ENCODE measurements at regions of chr6 and their contacts with region 1.

Region 1: DNA sequence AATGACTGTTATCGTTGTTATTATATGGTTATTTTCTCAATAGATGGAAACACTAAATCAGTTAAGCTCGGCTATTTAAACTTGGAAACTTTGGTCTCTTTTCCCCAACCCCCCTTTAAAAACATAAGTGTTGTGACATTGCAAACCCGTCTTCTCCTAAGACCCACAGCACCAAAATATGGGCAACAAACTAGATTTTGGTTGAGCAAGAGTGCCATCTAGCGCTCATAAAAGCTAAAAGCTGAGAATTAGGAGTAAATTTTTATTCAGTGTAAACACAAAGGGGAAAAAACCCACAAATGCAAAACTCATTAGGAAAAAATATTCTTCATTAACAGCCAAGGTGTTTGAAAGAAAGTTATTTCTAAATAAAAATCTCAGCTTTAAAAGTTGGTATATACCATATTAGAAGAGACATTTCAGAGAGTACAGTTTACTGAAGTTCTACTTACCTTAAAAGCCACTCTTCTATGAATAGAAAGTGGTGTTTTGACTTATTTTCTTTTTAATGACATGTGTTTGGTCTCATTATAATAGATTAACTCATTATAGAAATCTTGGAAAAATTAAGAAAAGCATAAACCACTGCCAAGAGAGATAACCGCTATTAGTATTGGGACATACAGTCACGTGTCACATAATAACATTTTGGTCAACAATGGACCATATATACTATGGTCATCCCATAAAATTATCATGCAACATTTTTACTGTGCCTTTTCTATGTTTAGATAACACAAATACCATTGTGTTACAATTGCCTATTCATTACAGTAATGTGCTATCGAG is 21.1 kb downstream of the SESN1 start:
- DNase-seq: peak; percentile 33
- H3K4me3 Mint-ChIP-seq: no peak overlapping the region
- H3K27ac Mint-ChIP-seq: no peak overlapping the region
- H3K4me1 Mint-ChIP-seq: peaks cover 21% of the 10 kb centered on the region
- H3K27me3 Mint-ChIP-seq: no peaks in the 10 kb centered on the region

Region 2: DNA sequence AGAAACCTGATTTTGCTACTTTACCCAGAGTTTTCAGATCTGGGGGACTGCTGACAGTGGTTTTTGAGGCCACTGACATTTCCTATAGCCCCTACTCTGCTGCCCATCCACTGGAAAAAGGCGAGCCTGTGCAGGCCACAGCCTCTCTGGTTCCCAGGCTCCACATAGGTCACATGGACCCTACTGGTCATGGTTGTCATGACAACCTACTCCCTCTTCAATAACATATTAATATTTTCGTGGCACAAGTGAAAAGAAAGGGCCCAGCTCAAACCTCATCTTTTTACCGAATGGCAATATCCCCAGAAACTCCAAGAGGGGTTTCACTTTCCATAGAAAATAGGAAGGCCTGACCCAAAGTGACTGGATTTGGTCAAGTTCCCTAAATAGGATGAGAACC is 523.8 kb before region 1 on chr6:
- CTCF ChIA-PET with region 1: interaction called, 125 read pairs
- POLR2A ChIA-PET with region 1: no interaction called
- intact Hi-C with region 1: no loop called
- DNase-seq: no peak
- H3K4me3 Mint-ChIP-seq: no peak overlapping the region
- H3K27ac Mint-ChIP-seq: no peak overlapping the region
- H3K4me1 Mint-ChIP-seq: no peaks in the 10 kb centered on the region
- H3K27me3 Mint-ChIP-seq: no peaks in the 10 kb centered on the region

Region 3: DNA sequence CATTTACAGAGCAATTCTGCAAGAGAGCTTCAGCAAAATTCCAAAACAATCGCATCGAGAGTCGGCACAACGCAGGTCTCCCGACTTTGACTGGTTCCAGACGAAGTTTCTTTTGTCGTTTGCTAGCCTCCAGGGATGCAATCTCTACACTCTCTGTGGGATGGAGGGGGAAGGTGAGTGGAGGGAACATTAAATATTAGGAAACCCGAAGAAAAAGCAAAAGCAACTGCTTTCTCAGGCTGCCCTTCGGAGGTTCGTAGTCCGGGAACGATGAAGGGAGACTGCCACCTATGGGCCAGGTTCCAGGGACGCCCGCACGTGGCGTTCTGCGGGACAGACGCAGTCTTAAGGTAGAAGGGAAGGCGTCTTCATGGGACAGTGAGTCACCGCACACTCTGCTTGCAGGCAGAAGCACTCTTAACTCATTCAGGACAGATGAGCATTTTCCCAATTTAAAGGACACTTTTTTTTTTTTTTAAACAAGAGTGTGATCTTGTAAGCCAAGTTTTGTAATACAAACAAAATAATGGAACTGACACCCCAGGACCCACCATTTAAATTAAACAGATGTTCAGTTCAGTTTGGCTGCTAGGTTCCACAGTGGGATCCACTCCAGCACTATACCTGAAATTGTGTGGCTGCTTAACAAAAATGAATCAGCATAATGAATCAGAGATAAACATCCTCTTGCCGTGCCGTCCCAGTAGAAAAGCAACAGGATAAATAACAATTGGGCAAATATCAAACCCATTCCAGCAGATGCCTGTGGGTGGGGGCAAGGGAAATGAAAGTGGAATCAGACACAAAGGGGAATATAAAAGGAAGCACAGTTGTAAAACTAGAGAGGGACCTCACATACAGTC is 291.1 kb before region 1 on chr6:
- CTCF ChIA-PET with region 1: interaction called, 7 read pairs
- POLR2A ChIA-PET with region 1: no interaction called
- intact Hi-C with region 1: loop called (anchors 2 kb)
- DNase-seq: peak; percentile 91
- H3K4me3 Mint-ChIP-seq: peak overlapping the region; percentile 73
- H3K27ac Mint-ChIP-seq: no peak overlapping the region
- H3K4me1 Mint-ChIP-seq: peaks cover 11% of the 10 kb centered on the region
- H3K27me3 Mint-ChIP-seq: no peaks in the 10 kb centered on the region

Region 4: DNA sequence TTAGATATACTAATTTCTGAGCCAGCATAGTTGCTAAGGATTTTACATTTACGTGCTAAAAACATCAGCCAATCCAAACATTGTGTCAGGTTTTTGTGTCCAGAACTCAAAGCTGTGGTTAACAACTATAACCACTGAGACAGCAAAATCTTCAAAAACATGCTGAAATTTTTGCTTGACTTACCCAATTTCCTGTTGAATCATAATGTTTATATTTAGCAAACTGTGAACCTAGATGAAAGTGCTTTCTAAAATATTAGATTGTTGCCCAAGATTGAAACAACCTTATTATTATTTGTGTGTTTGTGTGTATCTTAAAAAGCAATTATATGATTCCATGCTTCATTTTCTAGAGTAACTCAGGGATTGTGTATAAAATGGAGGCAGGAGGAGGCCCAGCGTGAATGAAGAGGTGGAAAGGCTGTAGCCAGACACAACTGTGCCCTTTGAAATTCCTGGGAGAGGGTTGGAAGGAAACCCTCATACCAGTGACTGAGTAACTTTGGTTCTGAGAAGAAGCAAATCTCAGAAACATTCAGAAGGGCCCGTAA is 177.4 kb before region 1 on chr6:
- CTCF ChIA-PET with region 1: interaction called, 24 read pairs
- POLR2A ChIA-PET with region 1: no interaction called
- intact Hi-C with region 1: loop called (anchors 5 kb)
- DNase-seq: no peak
- H3K4me3 Mint-ChIP-seq: no peak overlapping the region
- H3K27ac Mint-ChIP-seq: peak overlapping the region; percentile 56
- H3K4me1 Mint-ChIP-seq: peaks cover 33% of the 10 kb centered on the region
- H3K27me3 Mint-ChIP-seq: no peaks in the 10 kb centered on the region

Region 5: GRCh38 chr6:108921547-108922361 is 151.8 kb before region 1 on chr6:
- CTCF ChIA-PET with region 1: interaction called, 39 read pairs
- POLR2A ChIA-PET with region 1: no interaction called
- intact Hi-C with region 1: loop called (anchors 2 kb)
- DNase-seq: peak; percentile 68
- H3K4me3 Mint-ChIP-seq: peak overlapping the region; percentile 33
- H3K27ac Mint-ChIP-seq: peak overlapping the region; percentile 81
- H3K4me1 Mint-ChIP-seq: peaks cover 31% of the 10 kb centered on the region
- H3K27me3 Mint-ChIP-seq: peaks cover 4% of the 10 kb centered on the region

Region 6: GRCh38 chr6:109009236-109009961 is 64.1 kb before region 1 on chr6:
- CTCF ChIA-PET with region 1: interaction called, 21 read pairs
- POLR2A ChIA-PET with region 1: interaction called, 4 read pairs
- intact Hi-C with region 1: loop called (anchors 2 kb)
- DNase-seq: peak; percentile 93
- H3K4me3 Mint-ChIP-seq: peak overlapping the region; percentile 94
- H3K27ac Mint-ChIP-seq: peak overlapping the region; percentile 92
- H3K4me1 Mint-ChIP-seq: peaks cover 60% of the 10 kb centered on the region
- H3K27me3 Mint-ChIP-seq: no peaks in the 10 kb centered on the region

Region 7: DNA sequence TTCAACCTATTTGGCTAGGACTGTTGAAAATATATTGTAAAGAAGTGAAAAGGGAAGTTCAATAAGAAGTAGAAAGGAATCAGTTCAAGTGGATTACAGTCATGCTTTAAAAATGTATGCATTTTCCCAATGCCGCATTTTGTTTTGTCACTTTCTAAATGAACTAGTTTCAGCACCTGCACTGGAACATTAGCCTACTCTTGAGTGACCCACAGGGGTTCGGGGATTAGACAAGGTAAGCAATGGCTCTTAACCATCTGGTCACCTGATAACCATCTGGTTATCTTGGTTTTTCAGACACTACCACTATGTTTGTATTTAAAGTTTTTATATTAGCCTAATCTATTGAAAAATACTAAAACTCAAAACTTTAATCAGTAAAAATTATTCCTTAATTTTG is 211.1 kb after region 1 on chr6:
- CTCF ChIA-PET with region 1: no interaction called
- POLR2A ChIA-PET with region 1: no interaction called
- intact Hi-C with region 1: no loop called
- DNase-seq: no peak
- H3K4me3 Mint-ChIP-seq: no peak overlapping the region
- H3K27ac Mint-ChIP-seq: no peak overlapping the region
- H3K4me1 Mint-ChIP-seq: no peaks in the 10 kb centered on the region
- H3K27me3 Mint-ChIP-seq: peaks cover 5% of the 10 kb centered on the region

Region 8: GRCh38 chr6:109322825-109323224 is 249.3 kb after region 1 on chr6:
- CTCF ChIA-PET with region 1: no interaction called
- POLR2A ChIA-PET with region 1: no interaction called
- intact Hi-C with region 1: no loop called
- DNase-seq: no peak
- H3K4me3 Mint-ChIP-seq: no peak overlapping the region
- H3K27ac Mint-ChIP-seq: no peak overlapping the region
- H3K4me1 Mint-ChIP-seq: peaks cover 4% of the 10 kb centered on the region
- H3K27me3 Mint-ChIP-seq: no peaks in the 10 kb centered on the region

Region 9: GRCh38 chr6:109374326-109374859 is 300.9 kb after region 1 on chr6:
- CTCF ChIA-PET with region 1: no interaction called
- POLR2A ChIA-PET with region 1: no interaction called
- intact Hi-C with region 1: no loop called
- DNase-seq: no peak
- H3K4me3 Mint-ChIP-seq: peak overlapping the region; percentile 18
- H3K27ac Mint-ChIP-seq: peak overlapping the region; percentile 99
- H3K4me1 Mint-ChIP-seq: peaks cover 82% of the 10 kb centered on the region
- H3K27me3 Mint-ChIP-seq: no peaks in the 10 kb centered on the region

Measured in activated CD4-positive, alpha-beta memory T cell treated with anti-CD3 and anti-CD28 coated beads for 36 hours (primary cell).